GM12878 (cell line): ENCODE measurements at regions of chr2 and their contacts with region 1.

Region 1: GRCh38 chr2:30711646-30712085 is 95.6 kb downstream of the CAPN13 start:
- DNase-seq: peak; percentile 59
- ATAC-seq: peak; percentile 72
- H3K4me3 ChIP-seq: no peak overlapping the region
- H3K27ac ChIP-seq: no peak overlapping the region
- H3K4me1 ChIP-seq: peaks cover 13% of the 10 kb centered on the region
- H3K27me3 ChIP-seq: no peaks in the 10 kb centered on the region
- CTCF ChIP-seq: peak; percentile 100; a peak in 5 of 6 replicates
- EP300 ChIP-seq: no peak
- POLR2A ChIP-seq: no peak
- RAD21 ChIP-seq: peak; percentile 96

Region 2: DNA sequence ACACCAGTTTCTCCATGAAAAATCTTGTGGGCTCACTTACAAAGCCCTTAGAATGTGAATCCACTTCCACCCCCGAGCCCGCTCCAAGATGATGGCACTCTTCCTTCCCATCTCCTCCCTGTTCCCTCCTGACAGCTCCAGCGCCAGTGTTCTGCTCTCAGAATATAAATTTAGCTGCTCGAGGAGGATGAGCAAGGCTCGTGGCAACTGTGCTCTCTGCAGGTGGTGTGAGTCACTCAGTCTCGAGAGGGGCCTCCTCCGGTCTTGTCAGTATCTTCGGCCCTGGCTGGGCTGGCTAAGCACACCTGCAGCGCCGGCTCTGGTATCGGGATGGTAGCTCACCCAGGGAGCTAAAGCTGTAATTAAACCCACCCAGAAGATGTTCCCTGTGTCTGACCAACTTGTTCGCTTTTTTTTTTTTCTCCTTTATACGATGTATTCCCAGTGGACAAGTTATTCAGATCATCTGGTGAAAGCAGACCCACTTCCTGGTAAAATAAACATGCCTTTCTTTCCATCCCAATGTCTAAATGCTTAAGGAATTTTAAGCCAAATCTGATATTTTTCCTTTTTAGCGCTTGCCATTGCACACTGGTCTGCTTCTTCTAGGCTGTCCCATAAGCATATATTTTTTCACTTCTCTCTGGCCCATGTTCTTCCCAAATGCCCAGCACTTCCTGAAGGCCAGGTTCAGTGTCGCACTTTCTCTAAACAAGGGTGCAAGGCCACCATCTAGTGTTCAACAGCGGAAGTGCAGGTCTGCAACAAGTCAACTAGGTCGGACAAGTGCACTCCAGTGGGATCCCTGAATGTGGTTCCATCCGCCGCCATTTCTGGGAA is 596.3 kb before region 1 on chr2:
- CTCF ChIA-PET with region 1: interaction called, 14 read pairs
- POLR2A ChIA-PET with region 1: no interaction called
- RAD21 ChIA-PET with region 1: interaction called, 5 read pairs
- SMC1A ChIA-PET with region 1: interaction called, 3 read pairs
- in situ Hi-C with region 1: no loop called
- intact Hi-C with region 1: no loop called
- DNase-seq: peak; percentile 20
- ATAC-seq: peak; percentile 89
- H3K4me3 ChIP-seq: no peak overlapping the region
- H3K27ac ChIP-seq: no peak overlapping the region
- H3K4me1 ChIP-seq: no peaks in the 10 kb centered on the region
- H3K27me3 ChIP-seq: no peaks in the 10 kb centered on the region; a peak in 2 of 4 replicates
- CTCF ChIP-seq: peak; percentile 87 to 95 (median 92)
- EP300 ChIP-seq: no peak
- POLR2A ChIP-seq: no peak
- RAD21 ChIP-seq: peak; percentile 79

Region 3: GRCh38 chr2:30185186-30185585 is 526.5 kb before region 1 on chr2:
- CTCF ChIA-PET with region 1: interaction called, 11 read pairs
- POLR2A ChIA-PET with region 1: no interaction called
- RAD21 ChIA-PET with region 1: interaction called, 3 read pairs
- SMC1A ChIA-PET with region 1: interaction called, 5 read pairs
- in situ Hi-C with region 1: no loop called
- intact Hi-C with region 1: no loop called
- DNase-seq: no peak
- ATAC-seq: no peak
- H3K4me3 ChIP-seq: no peak overlapping the region
- H3K27ac ChIP-seq: no peak overlapping the region
- H3K4me1 ChIP-seq: no peaks in the 10 kb centered on the region
- H3K27me3 ChIP-seq: no peaks in the 10 kb centered on the region
- CTCF ChIP-seq: no peak
- EP300 ChIP-seq: no peak
- POLR2A ChIP-seq: no peak
- RAD21 ChIP-seq: no peak

Region 4: DNA sequence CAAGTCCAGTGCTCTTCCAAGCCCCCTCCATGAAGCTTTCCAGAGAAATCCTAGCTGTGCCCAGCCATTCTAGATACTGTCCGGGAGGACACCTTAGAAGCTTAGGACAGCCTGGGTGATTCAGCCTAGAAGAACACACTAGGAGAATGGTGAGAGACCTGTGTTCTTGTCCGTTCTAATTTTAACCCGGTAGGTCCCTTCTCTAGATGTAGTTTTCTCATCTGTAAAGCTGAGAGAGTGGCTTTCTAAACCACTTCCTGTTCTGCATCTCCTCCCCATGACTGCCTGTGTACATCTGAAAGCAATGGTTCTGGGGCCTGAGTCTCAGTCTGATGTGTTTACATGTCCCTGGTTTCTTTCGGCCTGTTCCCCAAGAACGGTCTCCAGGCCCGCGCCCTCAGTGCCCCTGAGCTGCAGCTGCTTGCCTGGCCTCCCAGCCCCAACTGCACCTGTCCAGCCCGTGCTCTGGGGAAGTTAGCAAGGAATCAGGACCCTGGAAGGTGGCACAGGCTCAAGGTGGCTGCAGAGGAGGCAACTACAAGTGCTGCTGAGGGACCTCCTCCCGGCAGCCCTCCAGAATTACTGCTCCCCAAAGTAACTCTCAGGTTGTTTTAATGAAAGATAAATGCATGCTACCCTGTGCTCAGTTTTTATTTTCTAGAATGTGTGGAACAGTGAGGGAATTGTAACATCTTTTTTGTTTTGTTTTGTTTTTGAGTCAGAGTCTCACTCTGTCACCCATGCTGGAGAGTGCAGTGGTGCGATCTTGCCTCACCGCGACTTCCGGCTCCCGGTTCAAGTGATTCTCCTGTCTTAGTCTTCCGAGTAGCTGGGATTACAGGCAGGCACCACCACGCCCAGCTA is 374.5 kb before region 1 on chr2:
- CTCF ChIA-PET with region 1: interaction called, 19 read pairs
- POLR2A ChIA-PET with region 1: no interaction called
- RAD21 ChIA-PET with region 1: interaction called, 15 read pairs
- SMC1A ChIA-PET with region 1: interaction called, 12 read pairs
- in situ Hi-C with region 1: no loop called
- intact Hi-C with region 1: loop called (anchors 5 kb)
- DNase-seq: peak; percentile 92
- ATAC-seq: peak; percentile 90
- H3K4me3 ChIP-seq: peak overlapping the region; percentile 66
- H3K27ac ChIP-seq: peak overlapping the region; percentile 98
- H3K4me1 ChIP-seq: peaks cover 72% of the 10 kb centered on the region
- H3K27me3 ChIP-seq: no peaks in the 10 kb centered on the region
- CTCF ChIP-seq: no peak
- EP300 ChIP-seq: peak; percentile 31 to 51; a peak in 2 of 4 replicates
- POLR2A ChIP-seq: peak; percentile 56
- RAD21 ChIP-seq: 0 out of 2 replicates have a peak, but pooled peaks have one; percentile 18

Region 5: DNA sequence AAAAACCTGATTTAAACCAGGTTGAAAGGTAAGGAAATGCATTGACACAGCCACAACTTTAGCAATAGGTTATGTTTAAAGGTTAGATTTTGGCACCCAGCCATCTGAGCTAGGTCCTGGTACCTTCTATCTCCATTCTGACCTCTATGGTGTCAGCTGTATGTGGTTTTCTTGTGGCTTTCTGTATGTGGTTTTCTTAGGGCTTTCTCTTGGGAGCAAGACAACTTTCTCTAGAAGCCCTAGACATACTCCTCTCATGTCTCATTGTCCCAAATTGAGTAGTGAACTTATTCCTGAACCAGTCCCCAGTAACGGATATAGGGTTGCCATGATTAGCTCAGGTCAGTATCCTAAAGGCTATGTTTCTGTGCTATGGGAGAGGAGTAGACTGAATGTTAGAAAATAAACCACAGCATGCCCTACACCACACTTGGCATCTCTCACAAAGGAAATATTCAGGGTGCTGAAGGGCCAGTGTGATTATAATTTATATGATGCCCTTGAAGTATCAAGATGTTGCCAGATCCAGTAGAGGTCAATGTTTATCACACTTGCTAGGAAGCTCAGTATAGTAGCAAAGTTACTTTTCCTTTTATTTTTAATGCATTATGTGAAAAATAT is 80.5 kb before region 1 on chr2:
- CTCF ChIA-PET with region 1: interaction called, 14 read pairs
- POLR2A ChIA-PET with region 1: no interaction called
- RAD21 ChIA-PET with region 1: interaction called, 4 read pairs
- SMC1A ChIA-PET with region 1: interaction called, 5 read pairs
- in situ Hi-C with region 1: no loop called
- intact Hi-C with region 1: no loop called
- DNase-seq: peak; percentile 48
- ATAC-seq: peak; percentile 56
- H3K4me3 ChIP-seq: no peak overlapping the region
- H3K27ac ChIP-seq: no peak overlapping the region
- H3K4me1 ChIP-seq: peaks cover 25% of the 10 kb centered on the region
- H3K27me3 ChIP-seq: no peaks in the 10 kb centered on the region
- CTCF ChIP-seq: no peak
- EP300 ChIP-seq: no peak
- POLR2A ChIP-seq: no peak
- RAD21 ChIP-seq: no peak

Region 6: GRCh38 chr2:30862054-30862651 is 150.5 kb after region 1 on chr2:
- CTCF ChIA-PET with region 1: interaction called, 147 read pairs
- POLR2A ChIA-PET with region 1: no interaction called
- RAD21 ChIA-PET with region 1: interaction called, 22 read pairs
- SMC1A ChIA-PET with region 1: interaction called, 59 read pairs
- in situ Hi-C with region 1: loop called (anchors 5 kb)
- intact Hi-C with region 1: loop called (anchors 1 kb)
- DNase-seq: no peak
- ATAC-seq: peak; percentile 84
- H3K4me3 ChIP-seq: no peak overlapping the region
- H3K27ac ChIP-seq: no peak overlapping the region
- H3K4me1 ChIP-seq: peaks cover 14% of the 10 kb centered on the region
- H3K27me3 ChIP-seq: no peaks in the 10 kb centered on the region
- CTCF ChIP-seq: peak; percentile 72 to 92 (median 86)
- EP300 ChIP-seq: no peak
- POLR2A ChIP-seq: no peak
- RAD21 ChIP-seq: peak; percentile 72

Region 7: GRCh38 chr2:31729764-31730092 is 1018.1 kb after region 1 on chr2:
- CTCF ChIA-PET with region 1: interaction called, 4 read pairs
- POLR2A ChIA-PET with region 1: no interaction called
- RAD21 ChIA-PET with region 1: no interaction called
- SMC1A ChIA-PET with region 1: no interaction called
- in situ Hi-C with region 1: no loop called
- intact Hi-C with region 1: loop called (anchors 10 kb)
- DNase-seq: peak; percentile 12
- ATAC-seq: peak; percentile 91
- H3K4me3 ChIP-seq: no peak overlapping the region
- H3K27ac ChIP-seq: no peak overlapping the region
- H3K4me1 ChIP-seq: no peaks in the 10 kb centered on the region
- H3K27me3 ChIP-seq: no peaks in the 10 kb centered on the region
- CTCF ChIP-seq: peak; percentile 50 to 64 (median 55)
- EP300 ChIP-seq: no peak
- POLR2A ChIP-seq: no peak
- RAD21 ChIP-seq: peak; percentile 44; the same call in 1 of the 2 replicates